ENCODE measurements at regions of chr3 and their contacts with region 1.

Region 1: GRCh38 chr3:12891985-12892839 is 50.8 kb upstream of the RPL32 start:
- DNase-seq: no peak
- H3K4me3 ChIP-seq: no peak overlapping the region
- H3K27me3 ChIP-seq: no peaks in the 10 kb centered on the region; the same call in 1 of the 2 replicates
- CTCF ChIP-seq: peak; percentile 87

Region 2: DNA sequence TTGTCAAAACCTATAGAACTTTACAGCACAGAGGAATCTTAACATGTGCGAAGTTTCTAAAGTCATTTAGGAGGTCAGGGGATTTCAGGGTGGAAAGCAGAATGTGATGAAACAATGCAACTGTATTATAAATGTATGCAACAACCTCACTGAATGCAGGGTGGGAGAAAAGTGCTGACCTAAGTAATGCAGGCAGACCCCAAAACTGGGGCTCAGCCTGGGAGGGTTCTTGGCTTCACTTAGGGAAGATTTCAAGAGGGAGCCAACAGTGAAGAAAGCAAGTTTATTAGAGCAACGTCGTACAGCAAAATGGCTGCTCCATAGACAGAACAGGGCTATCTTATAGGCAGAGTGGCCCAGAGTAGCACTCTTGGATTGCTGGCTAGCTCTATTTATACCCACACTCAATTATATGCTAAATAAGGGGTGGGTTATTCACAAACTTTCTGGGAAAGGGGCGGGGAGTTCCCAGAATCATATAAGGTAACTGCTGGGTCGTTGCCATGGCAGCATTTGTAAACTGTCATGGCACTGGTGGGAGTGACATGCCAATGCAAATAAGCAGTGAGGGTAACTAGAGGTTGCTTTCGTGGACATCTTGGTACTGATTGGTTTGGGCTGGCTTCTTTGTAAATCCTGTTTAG is 109.9 kb before region 1 on chr3:
- CTCF ChIA-PET with region 1: interaction called, 24 read pairs
- POLR2A ChIA-PET with region 1: no interaction called
- DNase-seq: no peak
- H3K4me3 ChIP-seq: no peak overlapping the region
- H3K27me3 ChIP-seq: peaks cover 5% of the 10 kb centered on the region
- CTCF ChIP-seq: no peak

Region 3: GRCh38 chr3:12861611-12862010 is 30.6 kb before region 1 on chr3:
- CTCF ChIA-PET with region 1: interaction called, 58 read pairs
- POLR2A ChIA-PET with region 1: no interaction called
- DNase-seq: no peak
- H3K4me3 ChIP-seq: no peak overlapping the region
- H3K27me3 ChIP-seq: peaks cover 4% of the 10 kb centered on the region
- CTCF ChIP-seq: no peak

Region 4: DNA sequence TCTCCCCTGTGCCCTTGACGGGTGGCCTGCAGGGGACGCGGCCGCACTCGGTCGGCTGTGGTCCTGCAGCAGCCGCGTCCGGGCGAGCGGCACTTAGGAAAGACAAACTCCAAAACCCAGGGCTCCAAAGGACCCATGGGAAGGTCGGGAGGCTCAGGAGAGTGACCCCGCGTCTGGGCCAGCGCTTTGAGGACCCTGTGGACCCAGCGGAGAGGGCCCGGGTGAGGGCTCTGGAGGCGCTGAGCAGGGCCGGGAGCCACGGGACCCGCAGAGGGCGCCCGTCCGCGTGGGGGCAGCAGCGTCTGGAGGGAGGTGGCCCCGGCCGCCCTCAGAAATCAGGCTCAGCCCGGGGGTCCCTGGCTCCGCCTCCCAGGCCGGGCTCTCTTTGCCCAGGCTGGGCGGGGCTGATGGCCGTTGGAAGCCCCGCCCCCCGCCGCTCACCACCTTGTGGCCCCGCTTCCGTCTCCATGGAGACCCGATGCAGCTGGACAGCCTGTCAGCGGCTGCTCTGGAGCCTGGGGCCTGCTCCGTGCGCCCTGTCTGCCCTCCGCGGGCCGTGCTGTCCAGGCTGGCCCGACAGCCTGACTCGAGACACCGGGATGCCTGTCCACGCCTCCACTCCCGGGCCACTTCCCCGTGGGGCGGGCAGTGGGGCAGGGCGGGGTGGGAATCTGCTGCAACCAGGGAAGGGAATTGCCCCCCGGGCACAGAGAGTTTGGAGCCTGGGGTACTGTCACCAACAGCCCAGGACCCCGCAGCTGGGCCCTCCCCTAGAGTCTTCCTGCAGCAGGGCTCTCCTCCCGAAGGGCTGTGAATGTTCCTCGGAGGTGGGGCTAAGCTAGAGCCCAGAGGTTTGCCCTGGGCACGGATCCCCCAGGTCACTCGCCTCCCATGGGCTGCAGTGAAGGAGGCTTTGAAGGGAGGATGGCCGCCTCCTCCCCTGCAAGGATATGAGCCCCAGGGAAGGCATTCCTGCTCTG is 16.1 kb before region 1 on chr3:
- CTCF ChIA-PET with region 1: interaction called, 58 read pairs
- POLR2A ChIA-PET with region 1: no interaction called
- DNase-seq: no peak
- H3K4me3 ChIP-seq: peak overlapping the region; percentile 32
- H3K27me3 ChIP-seq: no peaks in the 10 kb centered on the region
- CTCF ChIP-seq: peak; percentile 44

Region 5: GRCh38 chr3:12984023-12984823 is 92.0 kb after region 1 on chr3:
- CTCF ChIA-PET with region 1: interaction called, 14 read pairs
- POLR2A ChIA-PET with region 1: no interaction called
- DNase-seq: no peak
- H3K4me3 ChIP-seq: no peak overlapping the region
- H3K27me3 ChIP-seq: no peaks in the 10 kb centered on the region
- CTCF ChIP-seq: peak; percentile 86

Measured in BJ (cell line).